ENCODE measurements at regions of chr9 and their contacts with region 1.

Region 1: DNA sequence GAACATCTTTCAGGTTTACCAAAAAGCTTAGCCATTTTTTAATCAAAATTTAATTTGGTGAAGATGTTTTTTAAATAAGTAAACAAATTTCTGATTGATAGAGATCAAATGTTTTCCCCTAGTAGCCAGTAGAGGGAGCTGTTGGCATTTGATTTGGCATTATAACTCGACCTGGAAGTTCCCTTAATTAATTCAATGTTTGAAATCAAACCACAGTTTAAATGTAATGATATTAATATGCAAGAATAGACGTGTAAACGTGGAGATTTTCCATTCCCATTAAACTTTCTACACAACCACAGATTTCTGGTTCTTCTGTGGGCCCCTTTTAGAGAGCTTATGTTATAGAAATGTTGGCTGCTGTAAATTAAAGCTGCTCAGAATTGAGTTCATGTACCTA is 148.1 kb upstream of the MPDZ start:
- DNase-seq: peak; percentile 19
- ATAC-seq: no peak
- H3K4me3 ChIP-seq: no peak overlapping the region
- H3K4me3 Mint-ChIP-seq: no peak overlapping the region
- H3K27ac ChIP-seq: no peak overlapping the region
- H3K27ac Mint-ChIP-seq: no peak overlapping the region
- H3K4me1 ChIP-seq: no peaks in the 10 kb centered on the region
- H3K4me1 Mint-ChIP-seq: no peaks in the 10 kb centered on the region
- H3K27me3 ChIP-seq: no peaks in the 10 kb centered on the region
- H3K27me3 Mint-ChIP-seq: no peaks in the 10 kb centered on the region
- CTCF ChIP-seq: peak; percentile 74

Region 2: DNA sequence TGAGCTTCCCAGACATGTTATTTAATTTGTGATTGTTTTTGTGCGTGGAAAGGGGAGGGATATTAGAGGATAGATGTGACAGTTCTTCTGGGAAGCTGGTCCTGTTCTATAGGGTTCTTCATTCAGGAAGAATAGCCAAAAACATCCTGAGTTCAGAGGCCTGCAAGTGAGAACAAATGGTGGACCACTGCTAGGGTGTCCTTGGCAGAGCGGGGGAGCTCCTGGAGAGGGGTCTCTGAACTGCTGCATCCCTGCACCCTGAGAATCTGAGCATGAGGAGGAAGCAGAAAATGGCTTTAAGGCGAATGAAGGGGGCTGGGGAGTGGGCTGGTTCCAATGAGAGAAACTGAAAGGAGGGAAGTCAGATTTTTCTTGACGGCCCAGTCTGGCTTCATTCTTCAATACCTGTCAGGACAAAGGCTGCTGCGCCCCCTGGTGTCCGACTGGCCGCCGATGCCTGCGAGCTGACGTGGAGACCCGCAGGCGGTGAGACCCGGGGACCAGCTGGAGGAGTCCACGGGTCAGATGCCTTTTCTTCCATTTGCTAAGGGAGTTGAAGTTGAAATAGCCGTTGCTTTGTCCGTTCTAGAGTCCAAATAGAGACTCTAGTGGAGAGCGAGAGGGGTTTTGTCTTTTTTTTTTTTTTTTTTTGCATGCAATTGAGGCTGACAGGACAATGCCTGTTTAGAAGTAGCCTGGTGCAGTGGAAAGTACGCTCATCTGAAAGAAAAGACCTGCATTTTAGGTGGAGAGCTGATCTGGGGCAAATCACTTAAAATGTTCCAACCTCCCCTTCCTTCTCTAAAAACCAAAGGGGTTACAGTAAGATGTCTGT is 925.9 kb after region 1 on chr9:
- CTCF ChIA-PET with region 1: interaction called, 58 read pairs
- POLR2A ChIA-PET with region 1: no interaction called
- intact Hi-C with region 1: no loop called
- DNase-seq: peak; percentile 60
- ATAC-seq: peak; percentile 51
- H3K4me3 ChIP-seq: no peak overlapping the region
- H3K4me3 Mint-ChIP-seq: no peak overlapping the region
- H3K27ac ChIP-seq: no peak overlapping the region
- H3K27ac Mint-ChIP-seq: no peak overlapping the region
- H3K4me1 ChIP-seq: peaks cover 10 to 11% of the 10 kb centered on the region in 2 donors
- H3K4me1 Mint-ChIP-seq: peaks cover 4% of the 10 kb centered on the region
- H3K27me3 ChIP-seq: peaks cover 0 to 45% (median 17%) of the 10 kb centered on the region in 4 experiments
- H3K27me3 Mint-ChIP-seq: peaks cover 63% of the 10 kb centered on the region
- CTCF ChIP-seq: peak; percentile 70